ENCODE measurements at regions of chr17 and their contacts with region 1.

Region 1: DNA sequence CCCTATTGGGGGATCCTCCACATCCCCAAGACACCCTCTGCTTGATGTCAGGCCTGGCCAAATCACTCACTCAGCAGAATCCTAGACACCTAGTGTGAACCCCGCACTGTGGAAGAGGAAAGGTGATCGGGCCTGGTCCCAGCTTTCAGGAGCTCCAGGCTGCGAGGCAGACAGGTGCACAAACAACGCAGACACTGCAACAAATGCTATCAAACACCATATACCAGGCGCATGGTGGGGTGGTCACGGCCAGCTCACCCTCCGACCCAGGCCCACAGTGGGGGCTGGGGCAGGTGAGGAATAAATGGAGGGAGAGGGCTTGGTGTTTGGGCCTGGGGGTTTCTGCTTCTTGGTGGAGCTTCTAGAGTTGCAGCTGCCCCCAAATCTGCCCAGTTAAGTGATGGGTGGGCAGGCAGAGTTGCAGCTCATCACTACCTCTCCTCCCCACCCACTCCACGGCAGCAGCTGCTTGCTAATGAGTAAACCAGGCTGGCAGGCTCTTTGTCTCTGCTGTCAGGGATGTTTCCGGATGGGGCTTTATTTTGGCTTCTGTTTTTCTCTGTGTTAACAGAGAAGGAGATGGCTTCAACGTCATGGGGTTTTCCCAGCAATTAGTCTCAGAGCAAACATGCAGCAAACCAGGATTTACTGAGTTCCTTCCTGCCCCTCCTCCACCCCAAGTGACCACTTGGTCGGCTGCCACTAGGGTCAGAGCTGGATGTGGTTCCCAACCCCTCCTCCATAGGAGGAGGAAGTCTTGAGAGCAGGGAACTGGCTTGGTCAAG is 46.6 kb downstream of the PECAM1 start:
- DNase-seq: peak; percentile 84 to 90 (median 89)
- ATAC-seq: peak; percentile 75 to 91 (median 89)
- H3K4me3 ChIP-seq: no peak overlapping the region
- H3K27ac ChIP-seq: peak overlapping the region; percentile 31 to 95 (median 78)
- H3K4me1 ChIP-seq: peaks cover 7 to 78% (median 41%) of the 10 kb centered on the region in 12 donors
- H3K27me3 ChIP-seq: no peaks in the 10 kb centered on the region
- CTCF ChIP-seq: no peak
- POLR2A ChIP-seq: no peak

Region 2: DNA sequence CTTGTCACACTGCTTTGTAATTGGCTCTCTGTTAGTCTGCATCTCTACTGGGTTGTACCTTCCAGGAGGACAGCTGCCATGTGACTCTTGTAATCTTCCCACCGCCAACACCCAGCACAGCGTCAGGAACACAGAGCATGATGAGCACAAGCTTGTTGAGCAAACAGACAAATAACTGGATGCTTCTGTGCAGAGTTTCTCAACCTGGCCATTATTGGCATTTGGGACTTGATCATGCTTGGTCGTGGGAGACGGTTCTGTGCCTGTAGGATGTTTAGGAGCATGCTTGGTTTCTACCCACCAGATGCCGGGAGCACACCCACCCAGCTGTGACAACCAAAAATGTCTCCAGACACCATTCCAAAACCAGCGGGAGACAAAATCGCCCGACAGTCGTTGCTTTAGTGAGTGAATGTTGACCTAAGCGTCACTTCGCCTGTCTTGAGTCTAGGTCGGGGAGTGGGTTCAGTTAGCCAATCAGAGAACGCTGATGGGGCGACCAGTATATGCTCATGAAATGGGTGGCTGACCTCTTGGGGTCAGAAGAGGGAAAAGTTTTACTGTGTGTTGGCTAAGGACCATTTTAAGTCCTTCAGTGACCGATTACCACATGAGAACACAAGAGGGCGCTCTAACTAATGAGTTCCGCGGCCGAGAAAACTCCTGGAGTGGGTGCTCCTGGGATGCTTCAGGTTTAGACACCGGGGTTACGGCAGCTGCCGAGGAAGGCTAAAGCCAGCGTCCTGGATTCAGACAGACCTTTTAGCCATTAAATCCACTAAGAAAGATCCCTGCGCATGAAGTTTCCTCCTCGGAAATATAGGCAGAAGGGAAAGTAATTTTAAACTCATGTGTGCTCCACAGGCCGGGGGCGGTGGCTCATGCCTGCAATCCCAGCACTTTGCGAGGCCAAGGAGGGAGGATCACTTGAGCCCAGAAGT is 23.2 kb before region 1 on chr17:
- intact Hi-C with region 1: loop called in 3 of 10 experiments (anchors 2 kb)
- DNase-seq: peak in 4 of 5 donors; percentile 59 to 78 (median 70)
- ATAC-seq: peak; percentile 44 to 86 (median 74)
- H3K4me3 ChIP-seq: peak overlapping the region in 1 of 12 donors; percentile 1
- H3K27ac ChIP-seq: peak overlapping the region in 10 of 12 donors; percentile 2 to 63 (median 36)
- H3K4me1 ChIP-seq: peaks cover 0 to 60% (median 19%) of the 10 kb centered on the region in 12 donors
- H3K27me3 ChIP-seq: no peaks in the 10 kb centered on the region
- CTCF ChIP-seq: peak; percentile 69 to 83 (median 77)
- POLR2A ChIP-seq: no peak